Activated CD8-positive, alpha-beta T cell treated with anti-CD3 and anti-CD28 coated beads for 36 hours (primary cell): ENCODE measurements at regions of chr11 and their contacts with region 1.

Region 1: DNA sequence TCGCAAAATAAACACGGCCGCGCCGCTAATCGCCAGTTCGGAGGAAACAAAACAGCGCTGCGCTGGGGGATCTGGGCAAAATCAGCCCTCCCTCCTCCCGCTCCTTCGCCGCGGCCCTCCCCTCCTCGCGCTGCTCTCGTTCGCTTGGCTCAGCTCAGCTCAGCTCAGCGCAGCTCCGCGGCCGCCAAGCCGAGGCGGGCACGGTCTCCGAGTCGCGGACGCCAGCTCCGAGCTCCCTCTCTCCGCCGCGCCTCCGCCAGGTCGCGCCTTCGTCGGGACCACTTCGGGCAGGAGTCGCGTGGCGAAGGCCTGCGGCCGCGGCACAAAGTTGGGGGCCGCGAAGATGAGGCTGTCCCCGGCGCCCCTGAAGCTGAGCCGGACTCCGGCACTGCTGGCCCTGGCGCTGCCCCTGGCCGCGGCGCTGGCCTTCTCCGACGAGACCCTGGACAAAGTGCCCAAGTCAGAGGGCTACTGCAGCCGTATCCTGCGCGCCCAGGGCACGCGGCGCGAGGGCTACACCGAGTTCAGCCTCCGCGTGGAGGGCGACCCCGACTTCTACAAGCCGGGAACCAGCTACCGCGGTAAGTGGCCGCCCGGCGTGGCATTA is at the start of gene SPON1:
- DNase-seq: peak; percentile 63
- ATAC-seq: peak; percentile 83
- H3K4me3 Mint-ChIP-seq: peak within 1 kb of the TSS; percentile 65
- H3K27ac Mint-ChIP-seq: no peak within 1 kb of the TSS
- H3K4me1 Mint-ChIP-seq: peaks cover 8% of the 10 kb centered on the region
- H3K27me3 Mint-ChIP-seq: peaks cover 41% of the 10 kb centered on the region
- CTCF ChIP-seq: no peak
- total RNA-seq, gene SPON1: 0.96 to 1.4 TPM

Region 2: GRCh38 chr11:14065141-14065540 is 102.5 kb after region 1 on chr11:
- CTCF ChIA-PET with region 1: no interaction called
- POLR2A ChIA-PET with region 1: no interaction called
- intact Hi-C with region 1: loop called (anchors 5 kb)
- DNase-seq: peak; percentile 55
- ATAC-seq: peak; percentile 62
- H3K4me3 Mint-ChIP-seq: peak overlapping the region; percentile 42
- H3K27ac Mint-ChIP-seq: no peak overlapping the region
- H3K4me1 Mint-ChIP-seq: peaks cover 13% of the 10 kb centered on the region
- H3K27me3 Mint-ChIP-seq: no peaks in the 10 kb centered on the region
- CTCF ChIP-seq: no peak